GM10248 (cell line): ENCODE measurements at regions of chrX and their contacts with region 1.

Region 1: DNA sequence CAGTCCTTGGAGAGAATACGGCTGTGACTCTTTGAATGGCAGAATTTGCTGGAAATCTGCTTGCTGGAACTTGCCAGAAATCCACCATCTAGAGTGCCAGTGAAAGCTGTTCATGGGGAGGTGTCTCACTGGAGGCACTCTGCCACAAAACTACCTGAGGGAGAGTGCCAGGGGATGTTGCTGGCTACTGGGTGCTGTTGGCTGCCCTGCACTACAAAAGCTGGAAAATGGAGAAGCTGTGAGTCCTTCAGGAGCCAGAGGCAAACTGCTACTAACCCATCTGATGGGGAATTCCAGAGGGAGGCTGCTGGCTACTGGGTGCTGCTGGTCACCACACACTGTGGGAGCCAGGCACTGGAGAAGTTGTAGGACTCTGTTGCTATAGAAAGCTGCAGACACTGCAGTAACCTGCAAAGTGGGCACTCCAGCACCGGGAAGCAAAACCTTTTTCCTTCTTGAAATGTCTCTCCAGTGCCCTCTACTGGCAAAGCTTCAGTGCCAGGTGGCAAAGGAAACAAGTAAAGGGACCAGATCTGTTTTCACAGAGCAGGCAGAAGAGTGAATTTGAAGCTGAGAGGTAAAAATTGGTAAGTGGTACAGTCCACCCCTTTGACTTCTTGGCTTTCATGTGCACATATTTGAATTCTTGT is 47.8 kb upstream of the HSD17B10 start:
- DNase-seq: peak; percentile 40
- CTCF ChIP-seq: peak; percentile 47

Region 2: DNA sequence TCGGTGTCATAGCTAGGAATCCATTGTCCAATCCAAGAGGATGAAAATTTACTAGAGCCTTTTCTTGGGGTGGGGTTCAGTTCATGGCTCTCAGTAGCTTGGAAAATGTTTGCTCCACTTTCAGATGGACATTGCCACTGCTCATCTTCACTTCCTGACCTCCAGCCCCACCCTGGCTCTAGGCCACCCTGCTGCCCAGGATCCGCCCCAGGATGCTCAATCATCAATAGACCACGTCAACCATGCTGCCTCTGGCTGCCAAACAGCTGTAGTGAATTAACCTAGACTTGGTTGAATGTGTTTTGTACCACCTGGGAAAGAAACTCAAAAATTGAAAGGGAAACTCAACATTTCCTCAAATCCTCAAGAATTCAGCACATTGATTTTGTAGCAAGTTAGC is 10.6 kb before region 1 on chrX:
- CTCF ChIA-PET with region 1: interaction called, 11 read pairs
- POLR2A ChIA-PET with region 1: no interaction called
- DNase-seq: no peak
- CTCF ChIP-seq: no peak

Region 3: GRCh38 chrX:53494436-53494835 is 12.5 kb after region 1 on chrX:
- CTCF ChIA-PET with region 1: interaction called, 10 read pairs
- POLR2A ChIA-PET with region 1: no interaction called
- DNase-seq: no peak
- CTCF ChIP-seq: no peak

Region 4: GRCh38 chrX:53544940-53545339 is 63.0 kb after region 1 on chrX:
- CTCF ChIA-PET with region 1: no interaction called
- POLR2A ChIA-PET with region 1: no interaction called
- DNase-seq: no peak
- CTCF ChIP-seq: no peak